WTC11 (cell line): ENCODE measurements at regions of chr17 and their contacts with region 1.

Region 1: GRCh38 chr17:54992797-54993639 is 24.5 kb downstream of the STXBP4 start:
- DNase-seq: no peak
- ATAC-seq: peak; percentile 73
- H3K4me3 Mint-ChIP-seq: no peak overlapping the region
- H3K27ac Mint-ChIP-seq: no peak overlapping the region
- H3K4me1 Mint-ChIP-seq: no peaks in the 10 kb centered on the region
- H3K27me3 Mint-ChIP-seq: no peaks in the 10 kb centered on the region
- CTCF ChIP-seq: peak; percentile 24; the same call in 1 of the 2 replicates

Region 2: DNA sequence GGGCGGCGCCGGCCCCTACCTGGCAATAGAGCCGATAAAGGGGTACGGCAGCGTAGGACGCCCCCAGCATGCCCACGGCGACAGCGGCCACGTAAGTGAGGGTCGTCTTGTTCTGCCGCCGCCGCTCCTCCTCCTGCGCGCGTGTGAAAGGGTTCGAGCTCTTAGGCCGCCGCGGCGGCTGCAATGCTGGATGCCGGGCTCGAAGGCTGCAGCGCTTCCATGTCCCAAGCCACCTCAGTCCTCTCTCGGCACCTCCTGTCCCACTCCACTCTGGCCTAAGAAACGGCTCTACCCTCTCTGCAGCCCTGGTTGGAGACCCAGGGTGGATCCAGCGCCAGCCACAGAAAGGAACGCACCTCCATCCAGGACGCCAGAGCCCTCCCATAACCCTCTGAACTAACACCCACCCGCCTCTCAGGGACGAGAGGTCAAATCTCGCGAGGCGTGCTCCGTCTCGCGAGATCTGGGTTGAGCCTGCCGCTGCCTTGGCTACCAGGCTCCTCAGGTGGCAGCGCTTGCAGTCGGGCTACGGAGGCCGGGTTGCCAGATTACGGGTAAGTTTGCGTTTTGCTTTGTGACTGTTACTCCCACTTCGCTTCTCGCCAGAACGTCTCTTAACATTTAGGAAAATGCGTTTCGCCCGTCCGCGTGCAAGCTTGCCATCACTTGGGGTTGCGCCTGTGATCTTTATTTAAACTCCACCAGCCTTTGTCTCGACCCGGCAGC is 24.6 kb before region 1 on chr17 and contains the starts of genes COX11 and STXBP4:
- CTCF ChIA-PET with region 1: no interaction called
- POLR2A ChIA-PET with region 1: no interaction called
- DNase-seq: peak; percentile 92
- ATAC-seq: peak; percentile 98
- H3K4me3 Mint-ChIP-seq: no peak within 1 kb of the TSS
- H3K27ac Mint-ChIP-seq: no peak within 1 kb of the TSS
- H3K4me1 Mint-ChIP-seq: peaks cover 12% of the 10 kb centered on the region
- H3K27me3 Mint-ChIP-seq: no peaks in the 10 kb centered on the region
- CTCF ChIP-seq: no peak
- total RNA-seq, gene COX11: 58.1 to 65.0 TPM (median 59.9 TPM) in 3 replicates
- total RNA-seq, gene STXBP4: 9.4 to 12.0 TPM (median 9.8 TPM) in 3 replicates

Region 3: GRCh38 chr17:55005520-55005919 is 12.5 kb after region 1 on chr17:
- CTCF ChIA-PET with region 1: interaction called, 38 read pairs
- POLR2A ChIA-PET with region 1: no interaction called
- DNase-seq: peak; percentile 30
- ATAC-seq: peak; percentile 89
- H3K4me3 Mint-ChIP-seq: no peak overlapping the region
- H3K27ac Mint-ChIP-seq: no peak overlapping the region
- H3K4me1 Mint-ChIP-seq: peaks cover 24% of the 10 kb centered on the region
- H3K27me3 Mint-ChIP-seq: no peaks in the 10 kb centered on the region
- CTCF ChIP-seq: peak; percentile 40

Region 4: DNA sequence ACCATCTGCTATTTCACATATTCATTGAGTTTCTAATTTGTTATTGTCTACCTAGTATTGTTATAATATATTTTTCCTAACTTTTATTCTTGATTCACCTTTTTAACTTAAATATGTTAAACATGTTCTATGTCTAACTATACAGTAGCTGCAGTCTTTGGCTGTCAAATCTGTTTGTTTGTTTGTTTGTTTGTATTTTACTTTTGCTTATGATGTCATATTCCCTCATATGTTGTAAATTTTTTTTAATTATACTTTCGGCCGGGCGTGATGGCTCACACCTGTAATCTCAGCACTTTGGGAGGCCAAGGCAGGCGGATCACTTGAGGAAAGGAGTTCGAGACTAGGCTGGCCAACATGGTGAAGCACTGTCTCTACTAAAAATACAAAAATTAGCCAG is 27.3 kb after region 1 on chr17:
- CTCF ChIA-PET with region 1: no interaction called
- POLR2A ChIA-PET with region 1: no interaction called
- DNase-seq: no peak
- ATAC-seq: no peak
- H3K4me3 Mint-ChIP-seq: no peak overlapping the region
- H3K27ac Mint-ChIP-seq: no peak overlapping the region
- H3K4me1 Mint-ChIP-seq: peaks cover 21% of the 10 kb centered on the region
- H3K27me3 Mint-ChIP-seq: no peaks in the 10 kb centered on the region
- CTCF ChIP-seq: no peak

Region 5: GRCh38 chr17:55356434-55357328 is 363.7 kb after region 1 on chr17:
- CTCF ChIA-PET with region 1: interaction called, 10 read pairs
- POLR2A ChIA-PET with region 1: no interaction called
- DNase-seq: peak; percentile 88
- ATAC-seq: peak; percentile 100
- H3K4me3 Mint-ChIP-seq: no peak overlapping the region
- H3K27ac Mint-ChIP-seq: no peak overlapping the region
- H3K4me1 Mint-ChIP-seq: peaks cover 9% of the 10 kb centered on the region
- H3K27me3 Mint-ChIP-seq: no peaks in the 10 kb centered on the region
- CTCF ChIP-seq: peak; percentile 78